Thyroid gland (tissue), 4 donors: ENCODE measurements at regions of chr12 and their contacts with region 1.

Region 1: GRCh38 chr12:10033783-10034545 is 3.5 kb downstream of the CLEC9A start:
- DNase-seq: no peak
- H3K4me3 ChIP-seq: no peak overlapping the region
- H3K27ac ChIP-seq: no peak overlapping the region
- H3K4me1 ChIP-seq: no peaks in the 10 kb centered on the region
- H3K27me3 ChIP-seq: no peaks in the 10 kb centered on the region
- CTCF ChIP-seq: peak in 2 of 6 experiments; percentile 15 to 36
- POLR2A ChIP-seq: no peak

Region 2: GRCh38 chr12:9711664-9712063 is 322.3 kb before region 1 on chr12:
- intact Hi-C with region 1: no loop called
- DNase-seq: no peak
- H3K4me3 ChIP-seq: no peak overlapping the region
- H3K27ac ChIP-seq: no peak overlapping the region
- H3K4me1 ChIP-seq: no peaks in the 10 kb centered on the region
- H3K27me3 ChIP-seq: no peaks in the 10 kb centered on the region
- CTCF ChIP-seq: no peak
- POLR2A ChIP-seq: no peak

Region 3: DNA sequence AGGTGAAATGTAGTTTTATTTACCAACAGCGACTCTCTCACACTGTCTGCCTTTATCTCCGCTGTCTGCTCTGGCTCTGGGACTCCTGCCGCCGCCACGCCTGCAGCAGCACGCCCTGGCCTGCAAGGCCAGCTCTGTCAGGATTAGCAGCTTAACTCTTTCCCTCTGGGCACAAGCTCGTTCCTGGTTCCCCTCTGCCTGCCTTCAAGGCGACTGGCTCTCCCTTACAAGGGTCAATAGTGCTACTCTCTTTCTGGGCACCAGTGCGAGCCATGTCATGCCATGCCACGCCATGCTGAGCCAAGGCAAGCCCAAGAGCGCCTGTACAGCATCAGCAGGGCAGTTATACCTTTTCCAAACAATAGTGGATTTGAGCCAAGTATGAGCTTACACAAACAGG is 161.2 kb before region 1 on chr12:
- intact Hi-C with region 1: no loop called
- DNase-seq: no peak
- H3K4me3 ChIP-seq: no peak overlapping the region
- H3K27ac ChIP-seq: no peak overlapping the region
- H3K4me1 ChIP-seq: no peaks in the 10 kb centered on the region
- H3K27me3 ChIP-seq: no peaks in the 10 kb centered on the region
- CTCF ChIP-seq: no peak
- POLR2A ChIP-seq: no peak

Region 4: DNA sequence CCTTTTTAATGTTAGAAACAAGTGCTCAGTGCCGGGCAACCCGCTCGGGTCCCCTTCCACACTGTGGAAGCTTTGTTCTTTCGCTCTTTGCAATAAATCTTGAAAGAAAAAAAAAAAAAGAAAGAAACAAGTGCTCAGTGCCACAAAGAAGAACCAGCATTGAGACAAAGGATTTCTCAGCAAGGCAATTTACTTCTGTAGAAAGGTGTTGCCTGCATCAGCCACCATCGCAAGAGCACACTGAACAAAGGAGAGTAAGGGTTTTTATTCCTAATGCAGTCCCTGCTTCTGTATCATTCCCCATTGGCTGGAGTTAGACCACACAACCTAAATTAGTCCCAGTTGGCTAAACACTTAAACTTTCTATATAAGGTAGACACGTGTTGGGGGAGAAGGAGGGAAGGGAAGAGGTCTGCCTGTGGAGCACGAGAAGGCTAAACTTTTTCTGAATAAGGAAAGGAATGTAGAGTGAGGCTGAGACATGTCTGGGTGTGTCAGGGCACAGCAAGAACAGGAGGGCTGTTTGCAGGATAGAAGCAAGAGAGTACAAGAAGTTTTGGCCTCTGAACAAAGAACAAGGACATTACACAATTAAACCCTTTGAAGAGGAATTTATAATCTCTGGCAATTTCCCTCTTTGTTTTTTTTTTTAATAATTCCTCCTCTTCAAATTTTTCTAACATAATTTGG is 131.3 kb before region 1 on chr12:
- intact Hi-C with region 1: no loop called
- DNase-seq: no peak
- H3K4me3 ChIP-seq: no peak overlapping the region
- H3K27ac ChIP-seq: no peak overlapping the region
- H3K4me1 ChIP-seq: no peaks in the 10 kb centered on the region
- H3K27me3 ChIP-seq: no peaks in the 10 kb centered on the region
- CTCF ChIP-seq: no peak
- POLR2A ChIP-seq: no peak

Region 5: GRCh38 chr12:10130042-10130441 is 96.1 kb after region 1 on chr12 and contains the start of gene CLEC7A:
- intact Hi-C with region 1: loop called (anchors 10 kb)
- DNase-seq: no peak
- H3K4me3 ChIP-seq: no peak within 1 kb of the TSS
- H3K27ac ChIP-seq: no peak within 1 kb of the TSS
- H3K4me1 ChIP-seq: no peaks in the 10 kb centered on the region
- H3K27me3 ChIP-seq: no peaks in the 10 kb centered on the region
- CTCF ChIP-seq: no peak
- POLR2A ChIP-seq: no peak
- total RNA-seq, gene CLEC7A: 2.7 to 9.4 (median 5.2) TPM